Activated T-helper 1 cell treated with anti-CD3 and anti-CD28 coated beads, Interleukin-12 subunit alpha, Interleukin-12 subunit beta, Interleukin-2, Interleukin-4 antibody, amounts not matched to agents 30 ng/mL and 10 ng/mL and 1 ng/mL, durations not matched to agents 14 hours and 24 hours and 36 hours (primary cell): ENCODE measurements at regions of chr12 and their contacts with region 1.

Region 1: GRCh38 chr12:12736759-12737676 is 19.9 kb downstream of the CDKN1B start:
- DNase-seq: peak; percentile 42
- H3K4me3 Mint-ChIP-seq: peak overlapping the region; percentile 74
- H3K27ac Mint-ChIP-seq: peak overlapping the region; percentile 89
- H3K4me1 Mint-ChIP-seq: peaks cover 59% of the 10 kb centered on the region
- H3K27me3 Mint-ChIP-seq: no peaks in the 10 kb centered on the region

Region 2: DNA sequence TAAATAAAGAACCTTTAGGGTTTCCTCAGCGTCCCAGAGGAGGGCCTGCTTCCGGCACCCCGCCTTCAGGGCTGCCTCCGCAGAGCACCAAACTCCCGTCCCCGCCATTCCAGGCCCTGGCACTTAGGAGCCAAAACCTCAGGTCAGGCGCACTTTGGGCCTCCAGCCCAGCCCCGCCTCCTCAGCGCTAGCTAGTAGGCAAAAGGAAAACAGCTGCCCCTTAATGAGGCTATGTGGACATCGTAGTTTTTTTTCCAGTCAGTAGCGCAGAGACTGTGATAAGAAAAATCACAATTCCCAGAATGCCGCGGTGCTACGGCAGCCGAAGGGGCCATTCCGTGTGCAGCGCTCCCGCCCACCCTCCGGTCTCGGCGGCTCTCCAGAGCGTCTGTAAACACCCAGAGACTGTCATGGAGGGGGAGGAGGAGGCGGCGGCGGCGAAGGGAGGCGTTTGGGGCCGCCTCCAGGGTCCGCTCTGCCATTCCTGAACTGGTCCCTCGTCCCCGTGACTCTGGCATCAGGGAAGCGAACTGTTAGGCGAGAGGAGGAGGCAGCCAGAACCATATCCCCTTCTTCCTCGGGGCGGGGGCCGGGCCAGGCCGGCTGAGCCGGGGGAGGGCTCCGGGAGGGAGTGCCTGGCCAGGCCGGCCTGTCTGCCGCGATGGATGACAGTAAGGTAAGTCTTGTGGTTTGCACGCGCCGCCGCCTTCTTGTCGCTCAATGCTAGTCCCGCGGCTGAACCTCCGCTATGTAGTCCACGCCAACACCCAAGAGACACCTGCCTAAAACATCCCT is 125.3 kb before region 1 on chr12 and contains the start of gene CREBL2:
- intact Hi-C with region 1: loop called (anchors 1 kb)
- DNase-seq: peak; percentile 78
- H3K4me3 Mint-ChIP-seq: peak within 1 kb of the TSS; percentile 95
- H3K27ac Mint-ChIP-seq: peak within 1 kb of the TSS; percentile 96
- H3K4me1 Mint-ChIP-seq: peaks cover 47% of the 10 kb centered on the region
- H3K27me3 Mint-ChIP-seq: no peaks in the 10 kb centered on the region
- total RNA-seq, gene CREBL2: 16.7 and 17.9 TPM in 2 replicates

Region 3: DNA sequence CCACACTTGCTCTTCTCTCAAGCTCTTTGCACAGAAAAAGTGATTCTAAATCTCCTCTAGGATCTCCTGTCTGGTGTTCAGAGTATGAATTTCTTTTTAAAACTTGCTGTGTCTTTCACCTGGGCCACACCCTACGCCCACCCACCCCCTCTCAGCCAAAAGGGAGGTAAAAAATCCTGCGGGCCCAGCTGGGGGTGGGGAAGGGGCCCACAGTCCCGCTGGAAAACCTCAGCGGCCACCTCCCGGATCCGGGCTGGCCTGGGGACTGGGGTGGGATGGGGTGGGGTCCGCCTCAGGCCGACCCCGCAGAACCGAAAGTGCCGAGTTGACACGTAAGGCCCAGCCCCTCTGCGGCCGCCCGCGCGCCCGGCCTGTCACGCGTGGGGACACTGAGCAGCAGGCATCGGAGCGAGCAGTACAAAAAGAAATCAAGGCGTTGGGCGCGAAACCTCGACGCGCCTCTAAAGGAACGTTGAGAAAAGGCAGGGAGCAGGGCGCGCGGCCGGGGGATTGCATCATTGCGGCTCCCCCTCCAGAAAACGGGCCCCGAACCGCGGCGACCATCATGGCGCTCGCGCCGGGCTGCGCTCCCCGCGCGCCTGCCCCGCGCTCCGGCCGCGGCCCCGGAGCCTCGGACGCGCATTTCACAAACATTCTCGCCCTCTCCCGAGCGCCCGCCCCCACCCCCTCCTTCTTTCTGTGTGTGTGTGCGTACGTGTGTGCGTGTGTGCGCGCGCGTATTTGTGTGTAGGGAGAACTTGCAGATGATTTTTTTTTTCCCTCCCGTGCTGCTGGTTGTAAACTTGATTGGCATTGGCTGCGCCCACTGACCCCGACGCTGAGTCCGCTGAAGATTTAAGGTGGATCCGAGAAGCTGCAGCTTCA is 12.1 kb before region 1 on chr12:
- intact Hi-C with region 1: loop called (anchors 1 kb)
- DNase-seq: peak; percentile 88
- H3K4me3 Mint-ChIP-seq: peak overlapping the region; percentile 90
- H3K27ac Mint-ChIP-seq: peak overlapping the region; percentile 96
- H3K4me1 Mint-ChIP-seq: peaks cover 56% of the 10 kb centered on the region
- H3K27me3 Mint-ChIP-seq: peaks cover 3% of the 10 kb centered on the region